Natural killer cell (primary cell): ENCODE measurements at regions of chr10 and their contacts with region 1.

Region 1: GRCh38 chr10:73730153-73730906 is 13.8 kb upstream of the SEC24C start:
- DNase-seq: peak; percentile 86 to 93
- ATAC-seq: peak; percentile 89 to 93 (median 91)
- H3K4me3 ChIP-seq: peak overlapping the region; percentile 87
- H3K4me3 Mint-ChIP-seq: peak overlapping the region; percentile 100
- H3K27ac ChIP-seq: peak overlapping the region; percentile 91
- H3K27ac Mint-ChIP-seq: peak overlapping the region; percentile 97 to 99
- H3K4me1 ChIP-seq: peaks cover 14% of the 10 kb centered on the region
- H3K4me1 Mint-ChIP-seq: peaks cover 12 to 22% of the 10 kb centered on the region in 2 donors
- H3K27me3 ChIP-seq: no peaks in the 10 kb centered on the region
- H3K27me3 Mint-ChIP-seq: no peaks in the 10 kb centered on the region
- CTCF ChIP-seq: no peak

Region 2: GRCh38 chr10:73743905-73744663 is 13.8 kb after region 1 on chr10 and contains the start of gene SEC24C:
- intact Hi-C with region 1: loop called (anchors 1 kb)
- DNase-seq: peak; percentile 95 to 99
- ATAC-seq: peak; percentile 88 to 95 (median 88)
- H3K4me3 ChIP-seq: peak within 1 kb of the TSS; percentile 73
- H3K4me3 Mint-ChIP-seq: peak within 1 kb of the TSS; percentile 100
- H3K27ac ChIP-seq: peak within 1 kb of the TSS; percentile 92
- H3K27ac Mint-ChIP-seq: peak within 1 kb of the TSS; percentile 98 to 99
- H3K4me1 ChIP-seq: peaks cover 27% of the 10 kb centered on the region
- H3K4me1 Mint-ChIP-seq: peaks cover 30 to 35% of the 10 kb centered on the region in 2 donors
- H3K27me3 ChIP-seq: no peaks in the 10 kb centered on the region
- H3K27me3 Mint-ChIP-seq: no peaks in the 10 kb centered on the region
- CTCF ChIP-seq: no peak
- total RNA-seq, gene SEC24C: 153 to 161 (median 160) TPM

Region 3: DNA sequence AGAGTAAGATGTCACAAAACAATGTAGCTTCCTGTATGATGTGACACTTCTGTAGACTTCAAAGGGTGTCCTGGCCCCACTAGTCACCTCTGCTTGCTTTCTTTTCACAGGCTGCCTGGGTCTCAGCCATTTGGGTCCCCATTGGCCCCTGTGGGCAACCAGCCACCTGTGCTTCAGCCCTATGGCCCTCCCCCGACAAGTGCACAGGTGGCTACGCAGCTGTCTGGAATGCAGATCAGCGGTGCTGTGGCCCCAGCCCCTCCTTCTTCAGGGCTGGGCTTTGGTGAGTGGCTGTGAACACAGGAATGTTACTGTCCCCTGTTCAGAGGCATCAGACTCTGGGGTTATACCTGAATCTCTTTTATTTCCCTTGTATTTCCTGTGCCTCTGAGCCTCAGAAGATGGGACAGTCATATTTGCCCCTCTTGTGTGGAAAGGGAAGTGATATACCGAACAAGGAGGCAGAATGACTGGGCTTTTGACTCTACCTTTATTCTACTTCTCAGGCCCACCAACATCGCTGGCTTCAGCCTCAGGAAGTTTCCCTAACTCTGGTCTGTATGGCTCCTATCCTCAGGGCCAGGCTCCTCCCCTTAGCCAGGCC is 29.3 kb after region 1 on chr10:
- intact Hi-C with region 1: loop called (anchors 1 kb)
- DNase-seq: peak; percentile 71 to 87
- ATAC-seq: peak; percentile 82 to 94 (median 89)
- H3K4me3 ChIP-seq: no peak overlapping the region
- H3K4me3 Mint-ChIP-seq: peak overlapping the region; percentile 75
- H3K27ac ChIP-seq: peak overlapping the region; percentile 90
- H3K27ac Mint-ChIP-seq: peak overlapping the region; percentile 93 to 96
- H3K4me1 ChIP-seq: peaks cover 53% of the 10 kb centered on the region
- H3K4me1 Mint-ChIP-seq: peaks cover 67 to 74% of the 10 kb centered on the region in 2 donors
- H3K27me3 ChIP-seq: no peaks in the 10 kb centered on the region
- H3K27me3 Mint-ChIP-seq: no peaks in the 10 kb centered on the region
- CTCF ChIP-seq: no peak